ENCODE measurements at regions of chr16 and their contacts with region 1.

Region 1: DNA sequence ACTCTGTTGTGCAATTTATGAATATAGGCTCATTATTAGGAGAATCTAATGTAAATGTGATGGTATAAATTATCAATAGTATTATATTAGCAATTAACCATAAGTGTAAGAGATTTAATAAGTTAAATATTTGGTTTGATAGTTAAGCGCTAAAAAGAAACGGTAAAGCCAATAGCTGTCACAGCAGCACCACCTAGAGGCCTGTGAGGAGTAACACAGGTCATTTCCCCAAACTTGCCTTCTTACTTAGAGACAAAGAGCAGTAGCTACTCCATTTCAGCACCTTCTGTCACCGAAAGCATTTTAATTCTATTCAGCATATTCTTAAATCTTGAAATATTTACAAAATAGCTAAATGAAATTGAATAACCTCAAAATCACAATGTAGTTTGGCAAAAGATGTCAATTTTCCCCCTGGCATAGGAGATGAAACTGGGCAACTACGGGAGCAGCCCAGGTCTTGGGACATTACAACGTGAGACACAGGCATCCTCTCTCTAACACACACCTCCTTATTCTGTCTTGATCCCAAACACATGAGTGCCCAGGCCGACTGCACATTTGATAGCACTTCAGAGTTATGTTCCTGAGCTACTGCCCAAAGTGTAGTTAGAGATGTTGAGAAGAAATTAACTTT is 14.2 kb upstream of the DYNLRB2 start:
- DNase-seq: peak; percentile 77
- H3K4me3 Mint-ChIP-seq: no peak overlapping the region
- H3K27ac Mint-ChIP-seq: no peak overlapping the region
- H3K4me1 Mint-ChIP-seq: peaks cover 13% of the 10 kb centered on the region
- H3K27me3 Mint-ChIP-seq: peaks cover 4% of the 10 kb centered on the region

Region 2: GRCh38 chr16:80341263-80341662 is 185.3 kb before region 1 on chr16:
- CTCF ChIA-PET with region 1: no interaction called
- POLR2A ChIA-PET with region 1: no interaction called
- DNase-seq: no peak
- H3K4me3 Mint-ChIP-seq: no peak overlapping the region
- H3K27ac Mint-ChIP-seq: no peak overlapping the region
- H3K4me1 Mint-ChIP-seq: no peaks in the 10 kb centered on the region
- H3K27me3 Mint-ChIP-seq: peaks cover 2% of the 10 kb centered on the region

Region 3: GRCh38 chr16:80488167-80488566 is 38.4 kb before region 1 on chr16:
- CTCF ChIA-PET with region 1: no interaction called
- POLR2A ChIA-PET with region 1: no interaction called
- DNase-seq: no peak
- H3K4me3 Mint-ChIP-seq: no peak overlapping the region
- H3K27ac Mint-ChIP-seq: no peak overlapping the region
- H3K4me1 Mint-ChIP-seq: no peaks in the 10 kb centered on the region
- H3K27me3 Mint-ChIP-seq: peaks cover 20% of the 10 kb centered on the region

Region 4: GRCh38 chr16:80515374-80515773 is 11.2 kb before region 1 on chr16:
- CTCF ChIA-PET with region 1: interaction called, 17 read pairs
- POLR2A ChIA-PET with region 1: no interaction called
- DNase-seq: no peak
- H3K4me3 Mint-ChIP-seq: no peak overlapping the region
- H3K27ac Mint-ChIP-seq: no peak overlapping the region
- H3K4me1 Mint-ChIP-seq: peaks cover 17% of the 10 kb centered on the region
- H3K27me3 Mint-ChIP-seq: peaks cover 21% of the 10 kb centered on the region

Region 5: DNA sequence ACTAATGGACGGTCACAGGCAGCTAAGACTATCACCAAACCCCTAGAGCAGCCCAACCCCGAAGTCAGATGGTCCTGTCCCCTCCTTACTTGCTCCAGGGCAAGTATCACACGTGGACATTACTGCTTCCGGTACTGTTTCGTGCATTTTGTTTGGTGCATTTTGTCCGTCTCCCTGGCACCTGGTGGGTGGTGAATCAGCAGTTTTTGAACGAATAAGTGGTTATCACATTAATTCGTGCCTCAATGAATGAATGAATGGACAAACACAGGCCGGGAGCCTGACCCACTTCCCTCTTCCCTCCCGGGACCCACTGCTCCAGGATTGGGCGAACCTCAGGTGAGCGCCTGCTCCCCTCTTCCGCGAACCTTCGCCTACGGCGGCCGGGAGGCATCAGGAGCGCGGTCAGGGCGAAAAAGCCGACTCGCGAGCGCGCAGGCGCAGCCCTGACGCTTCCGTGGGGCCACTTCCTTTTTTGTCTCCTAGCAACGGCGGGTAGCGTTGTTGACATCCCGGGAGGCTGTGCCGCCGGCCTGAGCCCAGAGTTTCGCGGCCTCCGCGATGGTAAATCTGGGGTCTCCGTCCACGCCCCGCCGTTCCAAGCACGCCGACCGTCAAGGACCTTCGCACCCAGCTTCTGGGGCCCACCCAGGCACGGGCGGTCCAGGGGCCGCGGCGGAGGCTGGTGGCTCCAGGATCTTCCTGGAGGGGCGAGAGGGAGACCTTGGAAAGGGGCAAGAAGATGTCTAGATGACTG is 14.2 kb after region 1 on chr16 and contains the start of gene DYNLRB2:
- CTCF ChIA-PET with region 1: interaction called, 16 read pairs
- POLR2A ChIA-PET with region 1: interaction called, 3 read pairs
- DNase-seq: peak; percentile 94
- H3K4me3 Mint-ChIP-seq: peak within 1 kb of the TSS; percentile 90
- H3K27ac Mint-ChIP-seq: peak within 1 kb of the TSS; percentile 94
- H3K4me1 Mint-ChIP-seq: peaks cover 34% of the 10 kb centered on the region
- H3K27me3 Mint-ChIP-seq: peaks cover 3% of the 10 kb centered on the region
- total RNA-seq, gene DYNLRB2: 0.62 TPM in 1 of 2 experiments, not detected in the other

Region 6: DNA sequence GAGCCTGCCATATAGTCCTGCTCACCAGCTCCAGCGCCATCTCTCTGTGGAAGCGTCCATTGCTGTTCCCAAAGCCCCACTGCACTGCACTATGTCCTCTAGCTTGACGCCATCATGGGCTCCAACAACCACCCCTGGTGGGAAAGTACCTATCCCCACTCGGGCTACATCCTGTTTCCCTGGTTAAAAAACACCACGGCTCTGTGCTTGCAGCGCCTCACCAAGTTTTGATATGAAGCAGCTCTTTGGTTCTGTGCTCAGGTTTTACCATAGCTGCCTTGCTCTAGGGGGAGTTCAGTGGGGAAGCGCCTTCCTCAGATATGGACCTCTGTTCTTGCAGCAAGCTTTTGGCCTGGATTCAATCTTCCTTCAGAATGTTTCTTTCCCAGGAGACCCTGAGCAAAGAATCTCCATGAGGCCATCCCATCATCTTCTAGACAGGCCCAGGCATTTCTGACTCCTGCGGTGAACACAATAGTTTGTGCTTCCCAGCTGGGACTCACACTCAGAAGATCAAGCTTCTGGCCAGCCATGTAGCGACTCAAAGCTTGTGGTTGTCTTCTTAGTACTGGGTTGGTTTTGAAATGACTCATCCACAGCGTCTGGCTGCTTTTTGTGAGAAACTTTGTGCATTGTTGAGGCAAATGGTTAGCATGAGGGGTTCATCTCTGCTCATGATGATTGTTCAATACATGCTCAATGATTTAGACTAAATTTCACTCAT is 53.7 kb after region 1 on chr16:
- CTCF ChIA-PET with region 1: interaction called, 15 read pairs
- POLR2A ChIA-PET with region 1: no interaction called
- DNase-seq: peak; percentile 87
- H3K4me3 Mint-ChIP-seq: peak overlapping the region; percentile 73
- H3K27ac Mint-ChIP-seq: peak overlapping the region; percentile 98
- H3K4me1 Mint-ChIP-seq: peaks cover 63% of the 10 kb centered on the region
- H3K27me3 Mint-ChIP-seq: no peaks in the 10 kb centered on the region

Region 7: GRCh38 chr16:80599466-80599865 is 72.9 kb after region 1 on chr16:
- CTCF ChIA-PET with region 1: no interaction called
- POLR2A ChIA-PET with region 1: no interaction called
- DNase-seq: no peak
- H3K4me3 Mint-ChIP-seq: no peak overlapping the region
- H3K27ac Mint-ChIP-seq: no peak overlapping the region
- H3K4me1 Mint-ChIP-seq: no peaks in the 10 kb centered on the region
- H3K27me3 Mint-ChIP-seq: peaks cover 4% of the 10 kb centered on the region

Region 8: DNA sequence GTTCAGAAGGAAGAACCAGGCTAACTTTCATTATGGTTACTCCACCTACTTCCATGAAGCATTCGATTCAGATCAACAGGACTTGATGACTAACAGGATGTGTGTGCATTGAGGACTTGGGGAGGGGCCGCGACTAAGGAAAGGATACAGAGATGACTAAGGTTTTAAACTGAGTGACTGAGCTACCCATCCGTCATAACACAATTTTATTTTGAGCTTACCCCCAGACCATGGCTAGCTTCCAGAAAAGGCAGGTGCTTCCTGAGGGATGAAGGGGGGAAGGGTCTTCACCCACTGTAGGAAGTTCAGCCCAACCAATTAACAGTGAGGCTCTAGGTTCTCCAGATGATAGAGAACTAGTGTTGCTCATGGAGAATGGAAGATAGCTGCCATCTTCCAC is 280.4 kb after region 1 on chr16:
- CTCF ChIA-PET with region 1: interaction called, 31 read pairs
- POLR2A ChIA-PET with region 1: no interaction called
- DNase-seq: peak; percentile 69
- H3K4me3 Mint-ChIP-seq: peak overlapping the region; percentile 1
- H3K27ac Mint-ChIP-seq: peak overlapping the region; percentile 84
- H3K4me1 Mint-ChIP-seq: peaks cover 39% of the 10 kb centered on the region
- H3K27me3 Mint-ChIP-seq: no peaks in the 10 kb centered on the region

Region 9: GRCh38 chr16:80824718-80825364 is 298.3 kb after region 1 on chr16:
- CTCF ChIA-PET with region 1: interaction called, 25 read pairs
- POLR2A ChIA-PET with region 1: no interaction called
- DNase-seq: peak; percentile 60
- H3K4me3 Mint-ChIP-seq: no peak overlapping the region
- H3K27ac Mint-ChIP-seq: no peak overlapping the region
- H3K4me1 Mint-ChIP-seq: peaks cover 2% of the 10 kb centered on the region
- H3K27me3 Mint-ChIP-seq: peaks cover 20% of the 10 kb centered on the region

Region 10: GRCh38 chr16:80831039-80831438 is 304.5 kb after region 1 on chr16:
- CTCF ChIA-PET with region 1: interaction called, 25 read pairs
- POLR2A ChIA-PET with region 1: no interaction called
- DNase-seq: no peak
- H3K4me3 Mint-ChIP-seq: no peak overlapping the region
- H3K27ac Mint-ChIP-seq: no peak overlapping the region
- H3K4me1 Mint-ChIP-seq: no peaks in the 10 kb centered on the region
- H3K27me3 Mint-ChIP-seq: peaks cover 39% of the 10 kb centered on the region

Measured in activated CD4-positive, alpha-beta T cell treated with anti-CD3 and anti-CD28 coated beads, Interleukin-2, amount 10 ng/mL, durations not matched to agents 7 days and 5 days (primary cell).